Left ventricle myocardium superior (tissue), 1 donor: ENCODE measurements at regions of chr1 and their contacts with region 1.

Region 1: GRCh38 chr1:203504397-203505250 is 10.7 kb downstream of the OPTC start:
- DNase-seq: peak; percentile 86
- ATAC-seq: peak; percentile 47

Region 2: GRCh38 chr1:203558064-203558760 is 53.6 kb after region 1 on chr1:
- intact Hi-C with region 1: loop called (anchors 5 kb)
- DNase-seq: peak; percentile 63
- ATAC-seq: peak; percentile 57

Region 3: DNA sequence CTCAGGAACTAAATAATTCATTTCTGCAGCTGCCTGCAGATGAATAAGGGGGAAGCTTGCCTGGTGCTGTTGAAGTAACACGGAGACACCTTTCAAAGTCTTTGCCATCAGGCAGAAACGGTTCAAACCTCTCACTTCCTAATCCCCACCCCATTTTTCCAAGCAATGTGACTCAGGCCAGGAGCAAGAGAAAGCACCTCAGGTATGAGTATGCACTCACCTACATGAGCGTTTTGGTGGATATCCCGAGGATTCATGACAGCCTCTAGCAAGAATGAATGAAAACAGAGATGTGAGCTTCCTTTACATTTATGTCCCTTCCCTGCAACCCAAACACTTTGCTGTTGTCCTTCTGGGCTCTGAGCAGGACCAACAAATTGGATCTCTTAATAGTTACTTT is 197.0 kb after region 1 on chr1:
- intact Hi-C with region 1: loop called (anchors 2 kb)
- DNase-seq: no peak
- ATAC-seq: no peak